ENCODE measurements at regions of chr12 and their contacts with region 1.

Region 1: GRCh38 chr12:4743046-4743445 is 22.8 kb downstream of the GALNT8 start:
- DNase-seq: no peak
- H3K4me3 ChIP-seq: no peak overlapping the region
- H3K27ac ChIP-seq: no peak overlapping the region
- H3K4me1 ChIP-seq: no peaks in the 10 kb centered on the region
- H3K27me3 ChIP-seq: peaks cover 0 to 3% of the 10 kb centered on the region in 2 experiments
- CTCF ChIP-seq: no peak
- POLR2A ChIP-seq: no peak

Region 2: GRCh38 chr12:4648501-4649357 is 94.3 kb before region 1 on chr12 and contains the starts of genes AKAP3 and NDUFA9:
- CTCF ChIA-PET with region 1: no interaction called
- POLR2A ChIA-PET with region 1: no interaction called
- dilution Hi-C with region 1: loop called (anchors 10 kb)
- intact Hi-C with region 1: no loop called
- DNase-seq: peak; percentile 93
- H3K4me3 ChIP-seq: peak within 1 kb of the TSS; percentile 58 to 97 (median 96)
- H3K27ac ChIP-seq: peak within 1 kb of the TSS; percentile 79
- H3K4me1 ChIP-seq: peaks cover 16% of the 10 kb centered on the region
- H3K27me3 ChIP-seq: no peaks in the 10 kb centered on the region
- CTCF ChIP-seq: no peak
- POLR2A ChIP-seq: peak; percentile 73
- total RNA-seq, gene AKAP3: 0.62 TPM in 1 of 2 replicates, not detected in the other
- total RNA-seq, gene NDUFA9: 113 and 115 TPM in 2 replicates

Measured in endothelial cell of umbilical vein (primary cell).